Posterior vena cava (tissue), 2 donors: ENCODE measurements at regions of chr4 and their contacts with region 1.

Region 1: DNA sequence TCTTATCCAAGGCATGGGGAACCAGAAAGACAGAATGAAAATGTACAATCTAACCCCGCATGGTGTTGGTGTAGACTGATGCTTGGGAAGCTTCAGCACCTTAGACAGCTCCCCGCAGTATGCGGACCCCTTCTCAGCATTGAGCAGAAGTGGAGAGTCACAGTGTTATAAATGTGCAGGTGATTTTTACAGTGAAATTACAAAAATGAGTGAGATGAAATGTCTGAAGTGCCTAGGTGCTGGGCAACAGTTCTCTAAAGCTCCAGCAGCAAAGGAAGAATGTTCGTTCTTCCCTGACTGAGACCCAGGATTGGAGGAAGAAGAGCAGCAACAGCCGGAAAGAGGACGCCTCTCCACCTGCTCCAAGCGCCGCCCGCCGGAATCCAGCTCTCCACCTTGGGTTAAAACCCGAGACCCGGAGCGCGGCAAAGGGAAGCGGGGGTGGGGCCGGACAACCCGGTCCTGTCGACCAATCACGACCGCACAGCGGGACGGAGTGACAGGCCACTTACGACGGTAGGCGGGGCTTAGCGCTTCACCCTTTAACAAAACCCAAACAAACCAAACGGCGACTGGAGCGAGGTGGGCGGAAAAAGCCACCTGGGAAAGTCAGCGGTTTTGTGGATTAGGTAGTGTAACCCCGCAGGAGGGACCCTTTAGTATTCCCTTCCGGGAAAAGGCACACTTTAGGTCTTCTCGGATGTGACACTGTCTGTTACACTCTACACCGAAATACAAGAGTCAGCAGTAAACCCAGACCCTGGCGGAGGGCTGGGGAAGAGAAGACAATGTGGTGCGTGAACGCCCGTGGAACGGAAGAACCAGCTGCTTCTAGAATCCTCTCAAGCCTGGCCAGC is at the start of gene GLRA3:
- DNase-seq: peak; percentile 77
- total RNA-seq, gene GLRA3: not detected

Region 2: DNA sequence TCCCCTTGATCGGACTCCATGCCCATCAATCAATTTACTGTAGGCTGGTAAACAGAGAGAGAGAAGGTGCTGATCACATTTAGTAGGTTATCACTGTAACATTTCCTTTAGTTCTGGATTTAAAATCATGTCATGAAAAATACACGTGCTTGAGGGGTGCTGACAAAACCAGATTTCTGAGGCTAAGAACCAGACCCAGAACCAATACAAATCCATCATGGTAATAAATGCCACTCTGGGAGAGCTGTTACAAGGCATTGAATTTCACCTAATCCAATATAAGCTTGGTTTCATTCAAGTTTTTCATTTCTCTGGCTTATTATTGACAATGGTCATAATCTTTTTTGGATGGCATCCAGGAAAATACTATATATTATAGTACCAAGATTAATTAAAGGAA is 600.1 kb before region 1 on chr4:
- intact Hi-C with region 1: no loop called
- DNase-seq: no peak

Region 3: GRCh38 chr4:174517502-174518445 is 311.3 kb before region 1 on chr4:
- intact Hi-C with region 1: loop called in 1 of 2 experiments (anchors 5 kb)
- DNase-seq: no peak

Region 4: DNA sequence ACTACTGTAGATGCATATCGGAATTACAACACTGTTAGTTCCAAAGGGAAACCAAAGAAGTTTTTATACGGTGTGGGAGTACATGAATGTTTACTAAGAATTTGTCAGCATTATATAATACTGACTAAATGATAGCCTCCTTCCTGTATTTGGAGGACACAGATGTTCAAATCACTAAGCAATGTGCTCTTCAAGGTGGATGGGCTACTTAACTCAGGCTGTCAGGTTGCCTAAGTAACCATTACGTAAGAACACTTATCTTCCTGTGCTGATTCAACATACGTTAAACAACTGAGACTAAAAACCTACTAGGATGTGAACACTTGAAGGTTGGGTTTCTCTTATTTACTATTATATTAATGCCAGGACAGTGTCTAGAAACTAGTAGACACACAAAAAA is 224.9 kb before region 1 on chr4:
- intact Hi-C with region 1: no loop called
- DNase-seq: no peak